ENCODE measurements at regions of chr17 and their contacts with region 1.

Region 1: DNA sequence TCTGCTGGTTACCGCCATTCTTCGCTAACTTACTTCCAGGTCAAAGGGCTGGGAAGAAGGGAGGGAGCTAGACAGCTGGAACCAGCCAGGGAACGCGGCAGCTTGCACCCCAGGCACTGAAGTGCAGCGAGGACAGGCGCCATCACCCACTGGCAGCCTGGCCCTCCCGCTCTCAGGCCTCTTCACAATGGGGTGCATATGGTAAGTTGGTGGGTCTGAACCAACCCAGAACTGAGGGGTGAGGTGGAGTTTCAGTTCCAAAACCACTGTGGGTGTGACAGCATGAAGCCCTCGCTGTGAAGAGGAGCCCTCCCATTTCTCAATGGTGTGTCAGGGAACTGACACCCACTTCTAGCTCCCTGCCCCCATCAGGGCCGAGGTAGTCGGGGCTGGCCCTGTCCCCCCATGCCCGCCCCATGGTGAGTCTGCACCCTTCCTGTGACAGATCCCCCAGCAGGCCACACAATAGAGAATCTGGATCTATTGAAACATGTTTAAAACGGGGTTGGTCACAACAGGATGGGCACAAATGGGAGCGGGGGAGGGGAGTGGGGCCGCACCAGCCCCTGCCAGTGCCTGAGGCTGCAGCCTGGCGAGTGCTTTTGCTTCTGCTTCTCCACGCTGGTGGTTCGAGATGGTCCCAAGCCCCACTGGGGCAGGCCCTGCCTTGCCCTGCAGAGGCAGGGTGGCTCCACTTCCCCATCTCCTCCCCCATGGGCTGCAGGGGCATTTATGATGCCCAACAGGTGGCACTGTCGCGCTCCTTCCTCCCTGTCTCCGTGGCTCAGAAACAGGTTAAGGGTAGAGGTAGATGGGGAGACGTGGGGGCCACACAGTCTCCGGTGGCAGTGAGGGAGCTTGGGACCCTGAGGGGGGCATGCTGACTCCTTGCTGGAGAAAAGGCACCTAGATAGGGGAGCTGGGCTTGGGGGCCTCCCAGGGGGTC is 2.3 kb downstream of the LIMD2 start:
- DNase-seq: peak; percentile 57 to 83
- ATAC-seq: peak; percentile 42 to 75 (median 58)
- H3K4me3 ChIP-seq: peak overlapping the region; percentile 67
- H3K27ac ChIP-seq: peak overlapping the region; percentile 23
- H3K4me1 ChIP-seq: peaks cover 23% of the 10 kb centered on the region
- H3K27me3 ChIP-seq: peaks cover 0 to 28% (median 0%) of the 10 kb centered on the region in 3 donors
- CTCF ChIP-seq: peak; percentile 50

Region 2: GRCh38 chr17:63549946-63550807 is 147.4 kb before region 1 on chr17 and contains the start of gene DCAF7:
- intact Hi-C with region 1: no loop called
- DNase-seq: peak; percentile 99 to 100
- ATAC-seq: peak; percentile 97 to 99 (median 98)
- H3K4me3 ChIP-seq: peak within 1 kb of the TSS; percentile 94
- H3K27ac ChIP-seq: peak within 1 kb of the TSS; percentile 93
- H3K4me1 ChIP-seq: peaks cover 42% of the 10 kb centered on the region
- H3K27me3 ChIP-seq: no peaks in the 10 kb centered on the region
- CTCF ChIP-seq: no peak
- total RNA-seq, gene DCAF7: 24.0 to 30.2 (median 27.6) TPM

Region 3: DNA sequence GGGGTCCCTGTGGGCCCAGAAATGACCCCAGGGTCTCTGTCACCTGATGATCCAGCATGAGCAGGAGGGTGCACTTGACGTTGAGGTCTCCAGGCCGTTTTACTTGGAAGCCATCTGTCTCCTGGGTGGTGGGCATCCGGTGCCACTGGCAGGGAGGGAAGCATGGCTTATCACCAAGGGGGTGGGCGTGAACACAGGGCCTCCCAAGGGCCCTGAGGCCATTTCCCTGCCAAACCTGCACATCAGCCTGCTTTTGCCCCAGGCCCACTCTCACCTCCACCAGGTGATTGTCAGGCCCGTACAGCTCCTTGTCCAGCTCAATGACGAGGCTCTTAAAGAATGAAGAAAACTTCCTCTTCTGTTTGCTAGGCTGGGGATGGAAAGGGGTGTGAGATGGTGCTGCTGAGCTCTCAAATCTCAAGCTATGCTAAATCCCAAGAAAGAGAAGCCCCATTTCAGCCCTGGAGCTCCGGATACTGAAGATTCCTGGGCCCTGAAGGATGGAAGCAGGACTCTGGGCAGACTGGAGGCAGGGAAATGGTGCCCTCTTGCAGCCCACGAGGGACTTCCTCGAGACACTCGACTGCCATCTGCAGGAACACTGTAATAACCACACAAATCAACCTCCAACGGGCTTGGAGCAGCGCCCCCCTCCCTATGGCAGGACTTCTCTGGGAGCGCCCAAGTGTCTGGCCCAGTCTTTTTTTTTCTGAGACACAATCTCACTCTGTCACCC is 137.0 kb after region 1 on chr17:
- intact Hi-C with region 1: loop called in 1 of 2 experiments (anchors 5 kb)
- DNase-seq: peak; percentile 59 to 78
- ATAC-seq: peak; percentile 43 to 64 (median 52)
- H3K4me3 ChIP-seq: no peak overlapping the region
- H3K27ac ChIP-seq: peak overlapping the region; percentile 3
- H3K4me1 ChIP-seq: peaks cover 39% of the 10 kb centered on the region
- H3K27me3 ChIP-seq: no peaks in the 10 kb centered on the region
- CTCF ChIP-seq: peak; percentile 47